ENCODE measurements at regions of chr2 and their contacts with region 1.

Region 1: DNA sequence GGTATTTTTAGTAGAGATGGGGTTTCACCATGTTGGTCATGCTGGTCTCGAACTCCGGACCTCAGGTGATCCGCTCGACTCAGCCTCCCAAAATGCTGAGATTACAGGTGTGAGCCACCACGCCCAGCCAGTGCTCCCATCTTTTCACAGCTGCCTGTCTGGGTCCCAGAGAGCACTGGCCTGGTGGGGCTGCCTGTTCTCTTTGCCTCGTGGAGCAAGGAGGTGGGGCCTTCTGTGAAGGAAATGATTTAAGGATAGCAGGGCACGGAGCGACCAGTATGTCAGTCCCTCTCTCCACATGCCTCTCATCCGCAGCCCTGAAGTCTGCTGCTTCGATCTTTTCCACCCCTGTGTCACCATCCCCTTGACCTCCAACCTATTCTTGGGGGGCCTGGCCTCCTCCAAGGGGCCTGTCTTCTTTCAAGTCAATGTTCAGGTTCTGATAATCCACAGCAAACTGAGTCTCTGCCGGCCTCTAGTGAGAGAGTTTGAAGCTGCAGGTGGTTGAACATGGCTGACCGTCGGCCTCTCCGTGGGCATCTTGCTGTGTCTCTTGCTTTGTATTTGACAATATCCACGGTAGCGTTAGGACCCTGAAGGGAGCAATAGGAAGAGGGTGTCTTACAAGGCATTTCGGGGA is 28.2 kb upstream of the GIGYF2 start:
- H3K4me3 Mint-ChIP-seq: no peak overlapping the region
- H3K27ac Mint-ChIP-seq: peak overlapping the region; percentile 16
- H3K4me1 Mint-ChIP-seq: peaks cover 5% of the 10 kb centered on the region
- H3K27me3 Mint-ChIP-seq: peaks cover 10% of the 10 kb centered on the region

Region 2: DNA sequence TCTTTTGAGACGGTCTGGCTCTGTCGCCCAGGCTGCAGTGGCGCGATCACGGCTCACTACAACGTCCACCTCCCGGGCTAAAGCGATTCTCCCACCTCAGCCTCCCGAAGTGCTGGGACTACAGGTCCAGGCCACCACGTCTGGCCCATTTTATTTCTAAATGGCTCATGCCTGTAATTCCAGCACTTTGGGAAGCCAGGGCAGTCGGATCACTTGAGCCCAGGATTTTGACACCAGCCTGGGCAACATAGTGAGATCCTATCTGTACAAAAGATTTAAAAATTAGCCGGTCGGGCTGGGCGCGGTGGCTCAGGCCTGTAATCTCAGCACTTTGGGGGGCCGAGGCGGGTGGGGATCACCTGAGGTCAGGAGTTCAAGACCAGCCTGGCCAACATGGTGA is 61.9 kb before region 1 on chr2:
- intact Hi-C with region 1: loop called (anchors 2 kb)
- H3K4me3 Mint-ChIP-seq: no peak overlapping the region
- H3K27ac Mint-ChIP-seq: no peak overlapping the region
- H3K4me1 Mint-ChIP-seq: peaks cover 29% of the 10 kb centered on the region
- H3K27me3 Mint-ChIP-seq: peaks cover 23% of the 10 kb centered on the region

Region 3: DNA sequence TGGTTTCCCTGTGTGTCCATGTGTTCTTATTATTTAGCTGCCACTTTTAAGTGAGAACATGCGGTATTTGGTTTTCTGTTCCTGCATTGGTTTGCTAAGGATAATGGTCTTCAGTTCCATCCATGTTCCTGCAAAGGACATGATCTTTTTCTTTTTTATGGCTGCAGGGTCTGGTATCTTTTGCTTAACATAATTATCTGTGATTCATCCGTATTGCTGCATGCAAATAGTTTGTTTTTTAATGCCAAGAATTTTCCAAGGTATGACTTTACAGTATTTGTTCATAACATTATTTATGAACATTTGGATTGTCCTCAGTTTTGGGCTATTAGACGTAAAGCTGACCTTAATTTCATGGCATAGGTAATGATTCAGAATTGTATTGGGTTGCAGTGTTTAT is 46.0 kb after region 1 on chr2:
- intact Hi-C with region 1: no loop called
- H3K4me3 Mint-ChIP-seq: no peak overlapping the region
- H3K27ac Mint-ChIP-seq: no peak overlapping the region
- H3K4me1 Mint-ChIP-seq: peaks cover 28% of the 10 kb centered on the region
- H3K27me3 Mint-ChIP-seq: no peaks in the 10 kb centered on the region

Region 4: DNA sequence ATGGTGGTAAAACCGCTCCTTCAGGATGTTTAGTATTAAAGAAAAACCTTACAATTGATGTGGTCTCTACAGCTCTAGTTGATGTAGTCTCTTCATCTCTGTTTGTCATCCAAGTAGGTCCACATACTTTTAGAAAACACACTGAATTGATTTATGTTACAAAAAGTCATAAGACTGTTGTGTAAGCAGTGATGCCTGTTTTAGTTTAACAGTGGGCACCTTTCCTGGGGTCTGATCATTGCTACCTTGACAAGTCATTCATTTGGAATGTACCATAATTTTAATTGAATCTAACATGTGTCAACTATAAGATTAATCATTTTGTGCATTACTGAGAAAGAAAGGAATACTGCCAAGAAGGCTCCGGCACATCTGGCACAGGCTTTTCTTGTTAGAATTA is 62.5 kb after region 1 on chr2:
- intact Hi-C with region 1: no loop called
- H3K4me3 Mint-ChIP-seq: no peak overlapping the region
- H3K27ac Mint-ChIP-seq: no peak overlapping the region
- H3K4me1 Mint-ChIP-seq: peaks cover 13% of the 10 kb centered on the region
- H3K27me3 Mint-ChIP-seq: no peaks in the 10 kb centered on the region

Region 5: DNA sequence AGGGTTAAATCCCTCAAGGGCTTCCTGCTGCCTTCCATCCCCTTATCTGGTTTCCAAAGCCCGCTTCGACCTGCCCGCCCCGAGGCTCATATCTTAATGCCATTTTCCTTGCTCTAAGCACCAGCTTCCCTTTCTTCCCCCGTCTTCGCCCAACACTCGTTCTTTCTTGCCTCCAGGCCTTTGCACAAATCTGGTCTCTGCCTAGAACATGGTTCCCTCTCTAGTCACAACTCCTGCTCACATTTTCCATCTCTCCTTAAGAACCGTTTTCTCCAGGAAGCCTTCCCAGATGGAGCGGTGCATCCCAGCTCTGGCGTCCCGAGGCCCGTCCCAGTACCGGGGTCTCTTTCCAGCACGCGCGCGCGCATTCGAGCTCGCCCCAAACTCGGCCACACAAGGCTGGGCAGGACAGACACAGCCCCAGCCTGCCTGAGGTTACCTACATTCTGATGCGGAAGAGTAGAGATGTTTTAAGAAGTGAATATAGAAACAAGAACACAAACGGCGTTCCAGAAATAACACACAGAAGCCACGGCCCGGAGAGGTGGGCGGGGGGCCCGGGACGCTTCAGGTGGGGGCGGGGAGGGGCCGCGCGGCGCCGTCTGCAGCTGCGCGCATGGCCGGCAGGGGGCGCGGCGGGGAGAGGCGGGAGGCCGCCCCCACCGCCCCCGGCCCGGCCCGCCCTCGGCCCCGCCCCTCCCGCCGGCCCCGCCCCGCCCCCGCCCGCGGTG is 685.0 kb after region 1 on chr2 and contains the start of gene DGKD:
- intact Hi-C with region 1: no loop called
- H3K4me3 Mint-ChIP-seq: peak within 1 kb of the TSS; percentile 77
- H3K27ac Mint-ChIP-seq: peak within 1 kb of the TSS; percentile 80
- H3K4me1 Mint-ChIP-seq: peaks cover 88% of the 10 kb centered on the region
- H3K27me3 Mint-ChIP-seq: no peaks in the 10 kb centered on the region

Measured in dendritic cell treated with granulocyte-macrophage colony-stimulating factor and Interleukin-4, amounts not matched to agents 40 ng/mL and 50 ng/mL, for 4 days (primary cell).